B cell (primary cell): ENCODE measurements at regions of chr1 and their contacts with region 1.

Region 1: DNA sequence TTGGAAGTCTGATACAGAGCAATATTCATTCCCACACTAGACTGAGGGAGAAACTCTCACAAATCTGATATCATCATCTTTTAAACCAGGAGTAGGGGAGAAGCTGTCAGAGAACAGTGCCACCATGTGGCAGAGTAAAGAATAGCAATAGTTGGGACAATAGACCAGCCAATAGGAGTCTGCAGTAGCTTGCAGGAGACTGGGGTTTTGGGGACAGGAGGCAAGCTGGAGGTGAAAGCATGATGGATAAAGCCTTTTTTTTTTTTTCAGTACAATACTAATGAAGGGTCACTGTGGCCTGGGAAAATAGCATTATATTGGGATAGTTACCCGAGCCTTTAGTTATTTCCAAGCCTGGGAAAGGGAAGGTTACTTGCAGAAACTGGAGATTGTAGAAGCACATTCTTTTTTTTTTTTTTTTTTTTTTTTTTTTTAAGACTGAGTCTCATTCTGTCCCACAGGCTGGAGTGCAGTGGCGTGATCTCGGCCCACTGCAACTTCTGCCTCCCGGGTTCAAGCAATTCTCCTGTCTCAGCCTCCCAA is 120.7 kb downstream of the S1PR1 start:
- DNase-seq: peak; percentile 88
- ATAC-seq: peak; percentile 98
- H3K4me3 ChIP-seq: no peak overlapping the region
- H3K4me3 Mint-ChIP-seq: no peak overlapping the region
- H3K27ac ChIP-seq: no peak overlapping the region
- H3K27ac Mint-ChIP-seq: no peak overlapping the region
- H3K4me1 ChIP-seq: peaks cover 4 to 7% of the 10 kb centered on the region in 2 donors
- H3K4me1 Mint-ChIP-seq: peaks cover 7% of the 10 kb centered on the region
- H3K27me3 ChIP-seq: no peaks in the 10 kb centered on the region
- H3K27me3 Mint-ChIP-seq: no peaks in the 10 kb centered on the region
- CTCF ChIP-seq: peak; percentile 91

Region 2: DNA sequence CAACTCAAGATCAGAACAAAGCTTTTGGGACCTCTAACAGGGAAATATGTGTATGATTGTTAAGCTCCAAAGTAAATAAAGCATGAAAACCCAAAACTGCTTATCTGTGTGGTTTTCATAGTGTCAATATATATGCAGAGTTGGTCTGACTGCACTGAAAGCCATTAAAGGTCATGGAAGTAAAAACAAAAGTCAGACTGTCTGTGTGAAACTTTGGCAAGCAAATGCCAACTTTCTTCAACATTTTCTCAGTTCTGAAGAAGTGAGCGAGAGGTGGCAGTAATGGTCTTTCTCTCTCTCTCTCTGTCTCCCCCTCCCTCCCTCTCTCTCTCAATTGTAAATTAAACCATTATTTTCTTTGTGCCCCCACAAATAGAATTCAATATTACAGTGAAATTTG is 220.8 kb before region 1 on chr1:
- CTCF ChIA-PET with region 1: interaction called, 20 read pairs
- POLR2A ChIA-PET with region 1: no interaction called
- intact Hi-C with region 1: loop called (anchors 2 kb)
- DNase-seq: peak; percentile 54
- ATAC-seq: peak; percentile 70
- H3K4me3 ChIP-seq: no peak overlapping the region
- H3K4me3 Mint-ChIP-seq: peak overlapping the region; percentile 17
- H3K27ac ChIP-seq: peak overlapping the region; percentile 1 to 32
- H3K27ac Mint-ChIP-seq: peak overlapping the region; percentile 70
- H3K4me1 ChIP-seq: peaks cover 38 to 40% of the 10 kb centered on the region in 2 donors
- H3K4me1 Mint-ChIP-seq: peaks cover 49% of the 10 kb centered on the region
- H3K27me3 ChIP-seq: no peaks in the 10 kb centered on the region
- H3K27me3 Mint-ChIP-seq: no peaks in the 10 kb centered on the region
- CTCF ChIP-seq: no peak

Region 3: GRCh38 chr1:101317590-101317989 is 39.9 kb before region 1 on chr1:
- CTCF ChIA-PET with region 1: interaction called, 144 read pairs
- POLR2A ChIA-PET with region 1: interaction called, 3 read pairs
- intact Hi-C with region 1: no loop called
- DNase-seq: no peak
- ATAC-seq: no peak
- H3K4me3 ChIP-seq: no peak overlapping the region
- H3K4me3 Mint-ChIP-seq: no peak overlapping the region
- H3K27ac ChIP-seq: no peak overlapping the region
- H3K27ac Mint-ChIP-seq: no peak overlapping the region
- H3K4me1 ChIP-seq: peaks cover 8 to 9% of the 10 kb centered on the region in 2 donors
- H3K4me1 Mint-ChIP-seq: peaks cover 14% of the 10 kb centered on the region
- H3K27me3 ChIP-seq: no peaks in the 10 kb centered on the region
- H3K27me3 Mint-ChIP-seq: no peaks in the 10 kb centered on the region
- CTCF ChIP-seq: no peak

Region 4: DNA sequence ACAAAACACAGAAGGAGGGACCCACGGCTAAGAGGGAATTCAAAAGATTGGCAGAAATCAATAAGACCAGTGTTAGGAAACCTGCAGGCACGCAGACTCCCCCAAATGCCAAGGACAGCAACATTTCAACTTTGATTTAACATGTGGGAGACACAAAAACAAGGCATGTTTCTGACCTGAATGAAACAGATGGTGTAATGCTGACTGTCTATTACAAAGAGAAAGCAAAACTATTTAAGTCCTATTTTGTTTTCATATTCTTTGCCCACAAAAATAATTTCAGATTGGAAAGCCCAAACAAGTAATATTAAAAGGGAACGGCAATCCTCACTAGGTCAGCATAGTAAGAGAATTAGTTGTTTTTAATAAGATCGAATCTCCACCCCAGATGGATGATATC is 12.8 kb before region 1 on chr1:
- CTCF ChIA-PET with region 1: interaction called, 12 read pairs
- POLR2A ChIA-PET with region 1: no interaction called
- intact Hi-C with region 1: no loop called
- DNase-seq: no peak
- ATAC-seq: no peak
- H3K4me3 ChIP-seq: no peak overlapping the region
- H3K4me3 Mint-ChIP-seq: no peak overlapping the region
- H3K27ac ChIP-seq: no peak overlapping the region
- H3K27ac Mint-ChIP-seq: no peak overlapping the region
- H3K4me1 ChIP-seq: peaks cover 0 to 5% of the 10 kb centered on the region in 2 donors
- H3K4me1 Mint-ChIP-seq: peaks cover 10% of the 10 kb centered on the region
- H3K27me3 ChIP-seq: no peaks in the 10 kb centered on the region
- H3K27me3 Mint-ChIP-seq: no peaks in the 10 kb centered on the region
- CTCF ChIP-seq: no peak

Region 5: DNA sequence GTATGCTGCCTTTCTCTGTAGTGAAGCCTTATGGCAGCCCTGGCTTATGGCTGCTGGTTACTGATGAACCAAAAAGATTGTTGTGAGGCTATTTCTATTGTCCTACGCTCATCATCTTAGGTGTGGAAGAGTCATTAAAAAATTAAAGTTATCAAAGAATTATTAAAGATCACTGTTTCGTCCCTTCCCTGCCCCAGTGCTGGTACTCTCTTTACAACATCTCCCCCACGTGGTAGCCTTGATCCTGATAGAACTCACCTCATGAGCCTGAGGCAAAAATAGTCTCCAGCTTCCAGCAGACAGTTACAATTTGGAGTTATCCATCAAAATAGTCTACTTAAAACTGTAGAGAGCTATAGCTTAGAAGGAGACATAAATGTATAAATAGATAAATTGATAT is 80.8 kb after region 1 on chr1:
- CTCF ChIA-PET with region 1: interaction called, 21 read pairs
- POLR2A ChIA-PET with region 1: no interaction called
- intact Hi-C with region 1: loop called (anchors 1 kb)
- DNase-seq: peak; percentile 39
- ATAC-seq: peak; percentile 29
- H3K4me3 ChIP-seq: no peak overlapping the region
- H3K4me3 Mint-ChIP-seq: no peak overlapping the region
- H3K27ac ChIP-seq: no peak overlapping the region
- H3K27ac Mint-ChIP-seq: no peak overlapping the region
- H3K4me1 ChIP-seq: peaks cover 33 to 34% of the 10 kb centered on the region in 2 donors
- H3K4me1 Mint-ChIP-seq: peaks cover 27% of the 10 kb centered on the region
- H3K27me3 ChIP-seq: no peaks in the 10 kb centered on the region
- H3K27me3 Mint-ChIP-seq: no peaks in the 10 kb centered on the region
- CTCF ChIP-seq: peak; percentile 19